ENCODE measurements at regions of chr4 and their contacts with region 1.

Region 1: GRCh38 chr4:186781032-186781917 is 57.6 kb upstream of the FAT1 start:
- DNase-seq: peak; percentile 93
- H3K4me3 ChIP-seq: no peak overlapping the region
- H3K27ac ChIP-seq: peak overlapping the region; percentile 81
- H3K4me1 ChIP-seq: peaks cover 24% of the 10 kb centered on the region
- H3K27me3 ChIP-seq: no peaks in the 10 kb centered on the region
- CTCF ChIP-seq: no peak

Region 2: GRCh38 chr4:186852964-186853391 is 71.7 kb after region 1 on chr4:
- CTCF ChIA-PET with region 1: no interaction called
- dilution Hi-C with region 1: loop called (anchors 5 kb)
- in situ Hi-C with region 1: no loop called
- intact Hi-C with region 1: no loop called
- DNase-seq: no peak
- H3K4me3 ChIP-seq: no peak overlapping the region
- H3K27ac ChIP-seq: no peak overlapping the region
- H3K4me1 ChIP-seq: peaks cover 9% of the 10 kb centered on the region
- H3K27me3 ChIP-seq: no peaks in the 10 kb centered on the region
- CTCF ChIP-seq: no peak